Aorta (tissue), 5 donors: ENCODE measurements at regions of chr5 and their contacts with region 1.

Region 1: DNA sequence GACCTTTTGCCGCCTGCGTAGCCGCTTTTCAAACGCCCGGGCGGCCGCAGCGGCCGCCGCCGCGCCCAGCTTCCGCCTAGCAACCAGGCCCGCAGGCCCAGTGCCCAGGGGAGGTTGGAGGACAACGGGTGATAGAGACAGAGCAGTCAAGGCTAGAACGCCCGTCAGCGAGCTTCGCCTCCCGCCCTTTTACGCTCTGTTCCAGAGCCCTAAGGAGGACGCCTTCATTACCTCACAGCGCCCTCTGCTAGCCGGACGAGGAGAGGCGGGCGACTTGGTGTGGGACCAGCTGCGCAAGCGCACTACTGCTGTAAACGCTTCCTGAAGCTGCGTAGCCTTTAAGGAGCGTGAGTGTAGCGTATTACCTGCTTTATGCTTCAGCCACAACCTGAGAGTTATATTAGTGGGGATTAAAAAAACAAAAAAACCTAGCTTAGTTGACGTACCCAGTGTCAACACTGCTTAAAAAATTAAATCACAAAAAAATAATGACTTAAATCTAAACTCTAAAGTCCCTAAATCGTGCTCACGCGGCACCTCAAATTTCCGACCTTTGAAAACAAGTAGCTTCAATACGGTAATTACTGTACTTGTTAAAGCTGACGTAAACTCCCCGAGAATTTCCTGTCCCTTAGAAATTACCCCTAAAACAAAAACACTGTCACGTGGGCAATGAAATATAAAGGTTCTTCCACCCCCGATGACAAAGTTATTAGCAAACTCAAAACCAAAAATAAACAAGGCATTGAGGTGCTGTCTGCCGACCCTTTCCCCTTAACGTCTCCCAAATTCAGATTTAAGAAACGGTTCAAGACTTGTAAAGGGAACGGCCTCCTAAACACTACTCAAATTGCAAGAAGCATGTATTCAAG is at the start of gene CEP120:
- DNase-seq: peak; percentile 99
- ATAC-seq: peak; percentile 100
- H3K4me3 ChIP-seq: peak within 1 kb of the TSS; percentile 82 to 97
- H3K27ac ChIP-seq: peak within 1 kb of the TSS; percentile 46 to 89
- H3K4me1 ChIP-seq: peaks cover 1 to 5% of the 10 kb centered on the region in 2 donors
- H3K27me3 ChIP-seq: no peaks in the 10 kb centered on the region
- total RNA-seq, gene CEP120: 19.4 to 24.2 TPM

Region 2: DNA sequence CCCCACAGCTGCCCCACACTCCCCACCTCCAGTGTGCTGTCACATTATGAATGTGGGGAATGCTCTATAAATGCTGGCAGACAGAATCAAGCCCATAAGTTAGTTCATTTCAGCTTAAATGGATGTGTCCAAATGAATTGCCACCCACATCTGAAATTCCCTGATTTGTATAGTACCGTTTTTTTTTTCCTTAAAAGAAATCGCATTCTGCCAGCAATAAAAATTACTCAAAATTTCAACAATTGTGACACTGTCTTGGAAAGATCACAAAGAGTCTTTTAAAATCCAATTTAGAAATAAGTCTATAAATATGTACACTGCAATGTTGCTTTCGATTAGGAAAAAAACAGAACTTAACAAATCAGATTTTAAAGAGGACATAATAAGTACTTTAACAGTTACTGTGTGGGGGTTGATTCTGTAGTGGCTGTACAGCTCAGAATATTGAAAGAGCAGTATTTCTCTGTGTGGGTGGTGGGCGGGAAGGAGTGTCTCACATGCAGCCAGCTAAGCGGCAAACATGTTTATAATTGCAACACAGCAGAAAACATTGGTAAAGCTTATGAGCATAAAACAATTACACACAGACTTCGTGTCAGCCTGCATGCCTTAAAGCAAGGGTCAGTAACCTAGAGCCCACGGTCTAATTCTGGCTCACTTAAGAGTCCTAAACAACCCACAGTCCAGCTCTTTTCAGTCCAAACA is 63.6 kb after region 1 on chr5:
- intact Hi-C with region 1: loop called in 1 of 2 experiments (anchors 10 kb)
- DNase-seq: no peak
- ATAC-seq: peak; percentile 19
- H3K4me3 ChIP-seq: no peak overlapping the region
- H3K27ac ChIP-seq: no peak overlapping the region
- H3K4me1 ChIP-seq: peaks cover 2 to 7% of the 10 kb centered on the region in 2 donors
- H3K27me3 ChIP-seq: no peaks in the 10 kb centered on the region

Region 3: GRCh38 chr5:123511648-123512605 is 88.4 kb after region 1 on chr5 and contains the start of gene CSNK1G3:
- intact Hi-C with region 1: loop called (anchors 1 kb)
- DNase-seq: peak; percentile 98
- ATAC-seq: peak; percentile 98
- H3K4me3 ChIP-seq: peak within 1 kb of the TSS; percentile 94 to 99
- H3K27ac ChIP-seq: peak within 1 kb of the TSS; percentile 96 to 99
- H3K4me1 ChIP-seq: peaks cover 2 to 3% of the 10 kb centered on the region in 2 donors
- H3K27me3 ChIP-seq: no peaks in the 10 kb centered on the region
- total RNA-seq, gene CSNK1G3: 50.1 to 56.4 TPM

Region 4: DNA sequence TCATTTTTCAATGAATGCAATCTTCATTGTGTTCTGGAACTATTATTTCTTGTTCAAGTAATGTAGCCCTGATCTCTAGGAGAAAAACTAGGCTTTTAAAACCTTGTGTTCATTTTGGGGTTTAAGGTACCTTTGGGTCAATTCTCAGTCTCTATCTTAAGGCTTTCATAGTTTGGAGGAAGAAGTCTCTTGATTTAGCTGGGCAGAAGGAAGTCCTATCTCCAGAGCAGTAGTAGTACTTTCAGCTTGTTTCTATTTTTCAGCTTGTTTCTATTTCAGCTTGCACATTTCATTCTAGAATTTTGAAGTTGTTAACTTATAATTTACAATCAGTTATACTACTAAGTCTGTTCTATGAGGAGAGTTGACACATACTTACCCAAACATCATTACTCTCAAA is 103.7 kb after region 1 on chr5:
- intact Hi-C with region 1: no loop called
- DNase-seq: no peak
- ATAC-seq: no peak
- H3K4me3 ChIP-seq: no peak overlapping the region
- H3K27ac ChIP-seq: no peak overlapping the region
- H3K4me1 ChIP-seq: no peaks in the 10 kb centered on the region
- H3K27me3 ChIP-seq: no peaks in the 10 kb centered on the region

Region 5: DNA sequence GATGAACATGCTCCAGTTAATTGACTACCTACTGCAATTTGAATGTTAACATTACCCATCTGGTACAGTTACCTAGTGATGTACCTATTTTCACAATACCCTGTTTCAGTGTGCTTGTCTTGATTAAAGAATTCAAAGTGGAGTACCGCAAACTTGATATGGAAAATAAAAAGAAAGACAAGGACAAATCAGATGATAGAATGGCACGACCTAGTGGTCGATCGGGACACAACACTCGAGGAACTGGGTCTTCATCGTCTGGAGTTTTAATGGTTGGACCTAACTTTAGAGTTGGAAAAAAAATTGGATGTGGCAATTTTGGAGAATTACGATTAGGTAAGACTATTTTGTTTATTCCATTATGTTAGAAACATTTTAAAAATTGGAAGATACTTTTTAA is 122.0 kb after region 1 on chr5:
- intact Hi-C with region 1: no loop called
- DNase-seq: no peak
- ATAC-seq: no peak
- H3K4me3 ChIP-seq: no peak overlapping the region
- H3K27ac ChIP-seq: no peak overlapping the region
- H3K4me1 ChIP-seq: peaks cover 0 to 2% of the 10 kb centered on the region in 2 donors
- H3K27me3 ChIP-seq: no peaks in the 10 kb centered on the region

Region 6: GRCh38 chr5:123605822-123606221 is 182.3 kb after region 1 on chr5:
- intact Hi-C with region 1: loop called (anchors 5 kb)
- DNase-seq: no peak
- ATAC-seq: no peak
- H3K4me3 ChIP-seq: no peak overlapping the region
- H3K27ac ChIP-seq: no peak overlapping the region
- H3K4me1 ChIP-seq: no peaks in the 10 kb centered on the region
- H3K27me3 ChIP-seq: no peaks in the 10 kb centered on the region

Region 7: GRCh38 chr5:123610665-123611405 is 187.3 kb after region 1 on chr5:
- intact Hi-C with region 1: loop called (anchors 5 kb)
- DNase-seq: no peak
- ATAC-seq: peak; percentile 86
- H3K4me3 ChIP-seq: no peak overlapping the region
- H3K27ac ChIP-seq: no peak overlapping the region
- H3K4me1 ChIP-seq: no peaks in the 10 kb centered on the region
- H3K27me3 ChIP-seq: no peaks in the 10 kb centered on the region